GM18951 (cell line): ENCODE measurements at regions of chr14 and their contacts with region 1.

Region 1: GRCh38 chr14:22778084-22778483 is 11.6 kb downstream of the OXA1L start:
- POLR2A ChIP-seq: no peak

Region 2: GRCh38 chr14:22819151-22819988 is 41.3 kb after region 1 on chr14:
- in situ Hi-C with region 1: loop called (anchors 5 kb)
- POLR2A ChIP-seq: peak; percentile 21

Region 3: GRCh38 chr14:22900081-22900799 is 122.2 kb after region 1 on chr14:
- in situ Hi-C with region 1: no loop called
- POLR2A ChIP-seq: no peak